ENCODE measurements at regions of chr2 and their contacts with region 1.

Region 1: DNA sequence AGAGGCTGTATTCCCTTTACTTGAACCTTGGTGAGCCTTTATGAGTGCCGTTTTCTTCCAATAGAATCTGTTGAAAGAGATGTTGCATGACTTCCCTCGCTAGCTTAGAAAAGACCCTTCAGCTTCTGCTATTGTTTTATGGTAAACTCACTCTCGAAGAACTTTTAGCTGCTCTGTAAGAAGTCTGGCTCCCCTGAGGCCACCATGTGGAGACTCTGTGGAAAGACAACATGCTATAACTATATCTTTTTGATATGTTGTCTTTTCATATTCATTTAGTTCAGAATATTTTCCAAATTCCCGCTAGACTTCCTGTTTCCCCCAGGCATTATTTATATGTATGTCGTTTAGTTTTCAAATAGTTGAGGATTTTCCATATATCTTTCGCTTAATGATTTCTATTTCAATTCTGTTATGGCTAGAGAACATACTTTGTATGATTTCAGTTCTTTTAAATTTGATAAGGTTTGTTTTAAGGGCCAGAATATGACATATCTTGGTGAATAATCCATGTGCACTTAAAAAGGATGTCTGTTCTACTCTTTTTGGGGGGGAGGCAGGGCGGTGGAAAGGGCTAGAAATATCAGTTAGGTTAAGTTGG is 64.1 kb downstream of the PTPN4 start:
- DNase-seq: peak; percentile 26
- ATAC-seq: peak; percentile 71
- H3K4me3 Mint-ChIP-seq: no peak overlapping the region
- H3K27ac Mint-ChIP-seq: peak overlapping the region; percentile 81
- H3K4me1 Mint-ChIP-seq: peaks cover 36% of the 10 kb centered on the region
- H3K27me3 Mint-ChIP-seq: no peaks in the 10 kb centered on the region
- CTCF ChIP-seq: no peak; the same call in 1 of the 2 replicates

Region 2: DNA sequence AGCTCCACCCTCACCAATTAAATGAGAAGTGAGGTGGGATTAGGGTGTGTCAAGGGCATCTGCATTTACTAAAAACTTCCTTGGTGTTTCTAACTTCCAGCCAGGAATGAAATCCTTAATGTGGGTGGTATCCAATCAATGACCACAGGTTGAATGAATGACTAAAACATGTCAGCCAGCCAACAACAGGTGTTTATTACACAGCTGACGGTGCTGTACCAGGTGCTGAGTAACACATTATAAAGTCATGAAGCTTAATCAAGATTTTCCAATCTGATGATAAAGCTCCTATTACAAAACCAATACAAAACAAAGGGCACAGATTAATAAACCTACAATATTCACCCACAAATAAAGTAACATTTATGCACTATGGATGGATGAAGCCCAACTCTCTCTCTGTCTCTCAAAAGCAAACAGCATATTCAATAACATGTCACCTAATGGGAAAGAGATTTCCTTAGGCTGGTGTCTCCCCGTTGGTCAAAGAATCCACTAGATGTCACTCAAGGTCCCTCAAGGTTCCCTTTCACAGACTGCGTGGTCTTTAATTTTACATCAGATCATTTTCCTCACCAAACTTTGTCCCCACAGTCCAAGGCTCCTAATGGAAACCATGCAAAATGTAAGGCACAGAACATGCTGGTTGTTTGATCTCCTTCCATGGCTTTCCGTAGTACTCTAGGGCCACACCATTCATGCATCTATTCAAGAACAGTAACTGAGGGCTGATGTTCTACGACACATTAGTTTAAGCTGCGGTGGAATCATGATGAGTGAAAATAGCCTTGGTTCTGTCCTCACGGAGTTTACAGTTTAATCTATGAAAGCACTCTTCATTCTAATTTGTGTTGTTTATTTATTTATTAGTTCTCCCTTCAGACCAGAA is 70.5 kb before region 1 on chr2:
- CTCF ChIA-PET with region 1: interaction called, 18 read pairs
- POLR2A ChIA-PET with region 1: no interaction called
- DNase-seq: no peak
- ATAC-seq: peak; percentile 92
- H3K4me3 Mint-ChIP-seq: no peak overlapping the region
- H3K27ac Mint-ChIP-seq: no peak overlapping the region
- H3K4me1 Mint-ChIP-seq: peaks cover 2% of the 10 kb centered on the region
- H3K27me3 Mint-ChIP-seq: no peaks in the 10 kb centered on the region
- CTCF ChIP-seq: no peak